Dendritic cell treated with granulocyte-macrophage colony-stimulating factor and Interleukin-4, amounts not matched to agents 40 ng/mL and 50 ng/mL, for 4 days (primary cell): ENCODE measurements at regions of chr12 and their contacts with region 1.

Region 1: GRCh38 chr12:51341259-51342007 is 5.0 kb downstream of the CELA1 start:
- H3K4me3 Mint-ChIP-seq: peak overlapping the region; percentile 59
- H3K27ac Mint-ChIP-seq: peak overlapping the region; percentile 72
- H3K4me1 Mint-ChIP-seq: peaks cover 18% of the 10 kb centered on the region
- H3K27me3 Mint-ChIP-seq: peaks cover 8% of the 10 kb centered on the region

Region 2: DNA sequence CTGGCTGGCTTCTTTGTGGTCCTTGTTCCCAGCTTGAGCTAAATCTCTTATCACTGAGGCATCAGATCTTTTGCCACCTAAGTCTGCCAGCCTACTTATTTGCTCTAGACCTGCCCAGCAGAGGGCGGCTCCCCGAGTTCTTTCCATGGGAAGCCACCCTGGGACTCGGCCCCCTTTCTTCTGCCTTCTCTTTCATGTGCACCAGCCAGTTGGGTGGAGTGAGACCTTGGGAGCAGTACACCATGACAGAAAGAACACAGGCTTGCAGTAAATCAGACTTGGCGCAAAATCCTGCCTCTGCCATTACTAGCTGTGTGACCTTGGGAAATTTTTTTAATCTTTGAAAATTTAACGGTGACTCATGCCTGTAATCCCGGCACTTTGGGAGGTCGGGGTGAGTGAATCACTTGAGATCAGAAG is 78.7 kb before region 1 on chr12:
- intact Hi-C with region 1: loop called (anchors 2 kb)
- H3K4me3 Mint-ChIP-seq: no peak overlapping the region
- H3K27ac Mint-ChIP-seq: no peak overlapping the region
- H3K4me1 Mint-ChIP-seq: peaks cover 7% of the 10 kb centered on the region
- H3K27me3 Mint-ChIP-seq: peaks cover 9% of the 10 kb centered on the region

Region 3: GRCh38 chr12:51307655-51308593 is 33.5 kb before region 1 on chr12:
- intact Hi-C with region 1: loop called (anchors 5 kb)
- H3K4me3 Mint-ChIP-seq: no peak overlapping the region
- H3K27ac Mint-ChIP-seq: peak overlapping the region; percentile 69
- H3K4me1 Mint-ChIP-seq: peaks cover 29% of the 10 kb centered on the region
- H3K27me3 Mint-ChIP-seq: no peaks in the 10 kb centered on the region

Region 4: DNA sequence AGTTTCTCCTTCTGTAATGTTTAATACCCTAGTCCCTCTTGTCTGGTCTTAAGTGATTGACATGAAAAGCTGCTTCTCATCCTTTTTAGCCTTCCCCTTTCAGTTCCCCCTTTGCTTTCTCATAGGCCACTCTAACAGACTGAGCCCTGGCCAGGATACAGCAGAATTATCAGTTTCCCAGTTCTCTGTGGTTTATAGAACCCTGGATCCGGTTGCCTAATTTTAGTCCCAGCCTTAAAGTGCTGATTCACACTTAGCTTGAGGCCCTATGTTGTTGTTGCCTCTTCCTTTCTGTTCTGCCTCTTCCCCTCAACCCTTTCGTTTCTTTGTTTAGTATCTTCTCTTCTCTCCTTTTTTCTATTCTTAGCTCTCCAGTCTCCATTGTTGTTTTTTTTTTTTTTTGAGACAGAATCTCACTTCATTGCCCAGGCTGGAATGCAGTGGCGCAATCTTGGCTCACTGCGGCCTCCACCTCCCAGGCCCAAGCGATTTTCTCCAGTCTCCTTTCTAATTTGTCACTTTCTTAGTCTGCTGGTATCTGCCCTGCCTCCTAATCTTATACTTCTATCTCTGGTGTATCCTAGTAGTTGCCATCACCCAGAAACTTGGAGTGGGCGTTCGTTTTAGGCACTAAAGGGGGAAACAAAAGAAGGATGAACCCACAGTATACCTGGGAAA is 14.5 kb before region 1 on chr12:
- intact Hi-C with region 1: loop called (anchors 2 kb)
- H3K4me3 Mint-ChIP-seq: peak overlapping the region; percentile 57
- H3K27ac Mint-ChIP-seq: peak overlapping the region; percentile 93
- H3K4me1 Mint-ChIP-seq: peaks cover 73% of the 10 kb centered on the region
- H3K27me3 Mint-ChIP-seq: no peaks in the 10 kb centered on the region